Stomach (tissue), 19 donors: ENCODE measurements at regions of chr21 and their contacts with region 1.

Region 1: DNA sequence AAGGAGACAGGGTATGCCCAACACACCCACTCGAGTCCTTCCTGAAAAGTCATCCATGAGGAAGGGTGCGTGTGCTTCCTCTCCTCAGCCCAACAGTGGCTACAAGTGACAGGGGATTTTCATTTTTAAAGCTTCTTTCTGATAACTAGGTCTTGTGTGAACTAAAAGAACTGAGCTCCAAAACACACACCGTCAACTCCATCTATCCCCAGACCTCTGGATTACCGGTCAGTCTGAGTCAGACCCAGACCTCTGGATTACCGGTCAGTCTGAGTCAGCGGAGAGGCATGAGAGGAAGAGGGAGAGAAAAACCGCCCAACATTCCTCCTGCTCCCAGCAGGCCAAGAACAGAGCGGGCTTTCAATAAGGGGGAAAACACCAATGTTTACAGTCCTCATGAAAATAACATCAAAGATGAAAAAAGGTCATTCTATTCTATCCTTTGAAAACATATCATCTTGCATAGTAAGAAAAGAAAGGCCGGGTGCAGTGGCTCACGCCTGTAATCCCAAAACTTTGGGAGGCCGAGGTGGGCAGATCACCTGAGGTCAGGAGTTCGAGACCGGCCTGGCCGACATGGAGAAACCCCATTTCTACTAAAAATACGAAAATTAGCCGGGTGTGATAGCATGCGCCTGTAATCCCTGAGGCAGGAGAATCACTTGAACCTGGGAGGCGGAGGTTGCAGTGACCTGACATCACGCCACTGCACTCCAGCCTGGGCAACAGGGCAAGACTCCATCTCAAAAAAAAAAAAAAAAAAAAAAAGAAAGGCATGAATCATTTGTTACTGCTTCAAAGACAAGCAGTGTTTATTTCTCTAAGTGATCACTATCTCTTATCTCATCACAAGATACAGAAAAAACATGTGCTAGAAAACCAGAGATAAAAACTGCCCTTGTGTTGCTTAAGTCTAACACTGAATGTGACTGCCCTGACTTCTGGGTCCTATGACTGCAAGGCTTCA is 3.4 kb downstream of the PTTG1IP start:
- DNase-seq: peak; percentile 59 to 78
- H3K4me3 ChIP-seq: peak overlapping the region in 2 of 4 donors; percentile 91 to 98
- H3K27ac ChIP-seq: peak overlapping the region; percentile 62 to 99 (median 96)
- H3K4me1 ChIP-seq: peaks cover 79 to 87% (median 81%) of the 10 kb centered on the region in 4 donors
- H3K27me3 ChIP-seq: no peaks in the 10 kb centered on the region
- CTCF ChIP-seq: no peak
- EP300 ChIP-seq: no peak
- POLR2A ChIP-seq: no peak

Region 2: DNA sequence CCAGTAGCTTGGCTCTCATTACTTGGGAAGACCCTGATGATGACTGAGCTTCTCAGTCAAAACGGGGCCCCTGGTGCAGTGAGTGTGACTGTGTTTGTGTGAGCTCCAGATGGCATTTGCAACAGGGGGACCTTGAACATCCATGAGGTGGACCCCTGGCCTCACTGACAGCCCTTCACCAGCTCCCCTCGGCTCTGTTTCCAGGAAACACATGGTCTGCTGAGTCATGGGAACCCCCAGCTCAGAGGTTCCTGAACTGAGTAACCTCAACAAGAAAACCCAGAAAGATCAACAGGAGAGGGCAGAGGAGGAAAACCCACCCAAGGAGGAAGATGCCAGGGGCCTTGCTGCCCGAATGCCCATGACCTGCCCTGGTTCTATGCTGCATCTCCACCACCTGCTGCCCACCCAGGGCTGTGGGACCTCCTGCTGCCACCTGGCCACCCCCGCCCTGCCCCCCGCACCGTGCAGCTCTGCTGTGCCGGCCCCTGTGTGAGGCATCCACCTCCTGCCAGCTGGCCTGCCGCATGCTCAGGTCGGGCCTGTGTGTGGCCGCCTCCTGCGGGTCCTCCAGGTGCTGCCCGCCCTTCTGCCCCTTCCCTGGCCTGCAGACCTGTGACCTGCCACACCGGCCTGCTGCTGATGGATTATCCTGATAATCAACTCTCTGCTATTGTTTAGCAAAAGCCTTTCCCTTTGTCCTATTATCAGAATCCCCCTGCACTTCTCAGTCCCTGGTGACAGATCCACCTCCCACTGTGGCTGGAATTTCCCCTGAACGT is 183.9 kb before region 1 on chr21:
- intact Hi-C with region 1: no loop called
- DNase-seq: no peak
- H3K4me3 ChIP-seq: no peak overlapping the region
- H3K27ac ChIP-seq: no peak overlapping the region
- H3K4me1 ChIP-seq: no peaks in the 10 kb centered on the region
- H3K27me3 ChIP-seq: peaks cover 0 to 41% (median 32%) of the 10 kb centered on the region in 3 donors
- CTCF ChIP-seq: no peak
- EP300 ChIP-seq: no peak
- POLR2A ChIP-seq: no peak

Region 3: GRCh38 chr21:44817506-44817880 is 52.6 kb before region 1 on chr21:
- intact Hi-C with region 1: loop called (anchors 10 kb)
- DNase-seq: peak; percentile 94 to 97
- H3K4me3 ChIP-seq: peak overlapping the region; percentile 57 to 73 (median 68)
- H3K27ac ChIP-seq: peak overlapping the region; percentile 86 to 95 (median 89)
- H3K4me1 ChIP-seq: peaks cover 12 to 43% (median 29%) of the 10 kb centered on the region in 4 donors
- H3K27me3 ChIP-seq: no peaks in the 10 kb centered on the region
- CTCF ChIP-seq: no peak
- EP300 ChIP-seq: no peak
- POLR2A ChIP-seq: no peak

Region 4: DNA sequence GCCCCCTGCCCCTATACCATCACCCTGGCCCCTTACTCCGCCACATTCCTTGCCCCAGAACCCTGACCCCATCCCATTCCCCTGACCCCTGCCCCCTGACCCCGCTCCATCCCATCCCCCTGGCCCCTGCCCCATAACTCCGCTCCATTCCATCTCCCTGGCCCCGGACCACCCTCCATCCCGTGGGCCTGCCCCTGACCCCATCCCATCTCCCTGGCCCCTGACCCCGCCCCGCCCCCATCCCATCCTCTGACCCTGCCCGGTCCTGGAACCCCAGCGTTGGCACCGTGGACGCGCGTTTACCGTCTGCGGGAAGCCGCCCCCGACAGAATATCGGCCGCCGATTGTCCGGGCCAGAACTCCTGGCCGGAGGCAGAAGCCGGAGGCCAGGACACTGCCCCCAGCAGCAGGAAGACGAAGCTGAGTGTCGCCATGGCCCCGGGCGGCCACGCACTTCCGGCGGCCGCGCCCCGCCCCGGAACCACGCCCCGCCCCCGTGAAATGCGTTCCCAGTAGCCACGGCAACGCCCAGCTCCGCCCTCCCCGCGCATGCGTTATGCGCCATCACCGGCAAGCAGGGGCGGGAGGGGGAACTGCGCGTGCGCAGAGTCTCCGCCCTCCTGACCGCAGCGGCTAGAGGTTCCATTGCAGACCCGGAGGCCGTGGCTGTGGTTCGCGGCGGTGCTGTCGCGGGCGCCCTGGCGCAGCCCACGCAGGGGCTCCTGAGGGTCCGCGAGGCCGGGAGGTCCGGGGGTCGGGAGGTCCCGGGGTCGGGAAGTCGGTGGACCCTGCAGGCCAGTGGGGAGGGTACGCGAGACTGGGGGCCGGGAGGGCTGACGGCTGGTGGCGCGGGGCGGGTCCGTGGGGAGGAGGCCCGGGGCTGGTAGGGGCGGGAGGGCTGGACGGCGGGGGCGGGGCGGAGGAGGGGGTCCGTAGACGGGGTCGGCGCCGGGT is 417.7 kb after region 1 on chr21 and contains the start of gene POFUT2:
- intact Hi-C with region 1: no loop called
- DNase-seq: peak; percentile 99
- H3K4me3 ChIP-seq: peak within 1 kb of the TSS; percentile 80 to 94 (median 88)
- H3K27ac ChIP-seq: peak within 1 kb of the TSS; percentile 77 to 93 (median 90)
- H3K4me1 ChIP-seq: peaks cover 22 to 50% (median 38%) of the 10 kb centered on the region in 4 donors
- H3K27me3 ChIP-seq: peaks cover 0 to under 1% (median 0%) of the 10 kb centered on the region in 3 donors
- CTCF ChIP-seq: peak in 1 of 7 experiments; percentile 20
- EP300 ChIP-seq: no peak
- POLR2A ChIP-seq: peak in 2 of 4 donors; percentile 67 to 73
- total RNA-seq, gene POFUT2: 19.2 to 34.2 (median 29.3) TPM